ENCODE measurements at regions of chr12 and their contacts with region 1.

Region 1: GRCh38 chr12:110100315-110100970 is 23.7 kb upstream of the IFT81 start:
- DNase-seq: peak; percentile 55 to 84
- ATAC-seq: peak; percentile 54 to 69; a peak in 5 of 6 replicates
- H3K4me3 ChIP-seq: no peak overlapping the region
- H3K27ac ChIP-seq: peak overlapping the region; percentile 73 to 96
- H3K4me1 ChIP-seq: peaks cover 25% of the 10 kb centered on the region
- CTCF ChIP-seq: peak; percentile 97
- EP300 ChIP-seq: no peak
- POLR2A ChIP-seq: no peak
- RAD21 ChIP-seq: peak; percentile 97 to 99

Region 2: DNA sequence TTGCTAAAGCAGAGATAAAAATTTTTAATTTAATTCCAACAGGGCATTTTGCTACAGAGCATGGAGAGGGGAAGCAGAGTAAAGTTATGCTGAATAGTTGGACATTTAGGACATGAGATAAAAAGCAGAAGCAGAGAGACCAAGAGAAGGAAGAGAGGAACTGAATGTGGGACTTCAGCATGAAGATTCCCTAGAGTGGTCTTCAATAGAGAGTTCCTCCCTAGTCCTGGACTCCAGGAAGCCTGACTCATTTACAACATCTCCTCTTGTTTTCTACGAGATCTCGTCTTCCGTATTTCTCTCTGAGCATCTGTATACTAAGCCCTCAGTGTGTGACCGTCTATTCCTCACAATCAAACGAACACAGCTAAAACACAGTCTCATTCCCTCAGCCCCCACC is 11.5 kb before region 1 on chr12:
- CTCF ChIA-PET with region 1: interaction called, 78 read pairs
- POLR2A ChIA-PET with region 1: no interaction called
- DNase-seq: no peak
- ATAC-seq: no peak
- H3K4me3 ChIP-seq: no peak overlapping the region
- H3K27ac ChIP-seq: no peak overlapping the region
- H3K4me1 ChIP-seq: no peaks in the 10 kb centered on the region
- CTCF ChIP-seq: no peak
- EP300 ChIP-seq: no peak
- POLR2A ChIP-seq: no peak
- RAD21 ChIP-seq: no peak

Measured in A549 (cell line).